ENCODE measurements at regions of chr3 and their contacts with region 1.

Region 1: GRCh38 chr3:149480325-149481017 is 6.0 kb downstream of the TM4SF4 start:
- DNase-seq: peak; percentile 55 to 81 (median 70)
- H3K4me3 ChIP-seq: no peak overlapping the region
- H3K27ac ChIP-seq: no peak overlapping the region
- H3K4me1 ChIP-seq: no peaks in the 10 kb centered on the region
- H3K27me3 ChIP-seq: no peaks in the 10 kb centered on the region
- CTCF ChIP-seq: peak; percentile 26 to 71 (median 26)
- EP300 ChIP-seq: no peak
- POLR2A ChIP-seq: no peak

Region 2: GRCh38 chr3:149395730-149396129 is 84.7 kb before region 1 on chr3:
- intact Hi-C with region 1: loop called in 1 of 4 experiments (anchors 2 kb)
- DNase-seq: peak in 4 of 5 donors; percentile 40 to 65 (median 44)
- H3K4me3 ChIP-seq: no peak overlapping the region
- H3K27ac ChIP-seq: no peak overlapping the region
- H3K4me1 ChIP-seq: peaks cover 3% of the 10 kb centered on the region
- H3K27me3 ChIP-seq: no peaks in the 10 kb centered on the region
- CTCF ChIP-seq: no peak
- EP300 ChIP-seq: no peak
- POLR2A ChIP-seq: no peak

Region 3: DNA sequence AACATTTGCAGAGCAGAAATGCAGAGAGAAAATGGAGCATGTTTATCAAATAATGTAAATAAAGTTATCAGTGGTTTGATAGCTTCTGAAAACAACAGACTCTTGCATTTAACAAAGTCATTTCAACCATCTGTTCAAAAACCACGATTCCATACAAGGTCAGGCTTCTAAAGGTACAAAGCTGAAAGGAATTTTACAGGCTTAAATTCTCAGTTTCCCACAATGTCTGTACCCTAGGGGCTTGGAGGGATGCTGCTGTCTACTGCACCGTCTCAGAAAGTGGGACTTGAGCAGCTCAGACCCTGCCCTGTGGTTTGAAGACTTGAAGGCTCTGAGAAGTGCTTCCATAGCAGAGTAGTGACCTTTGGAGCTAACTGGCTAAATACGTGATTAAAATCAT is 72.6 kb before region 1 on chr3:
- intact Hi-C with region 1: no loop called
- DNase-seq: no peak
- H3K4me3 ChIP-seq: no peak overlapping the region
- H3K27ac ChIP-seq: no peak overlapping the region
- H3K4me1 ChIP-seq: no peaks in the 10 kb centered on the region
- H3K27me3 ChIP-seq: no peaks in the 10 kb centered on the region
- CTCF ChIP-seq: no peak
- EP300 ChIP-seq: no peak
- POLR2A ChIP-seq: no peak